Stomach (tissue), 19 donors: ENCODE measurements at regions of chr3 and their contacts with region 1.

Region 1: GRCh38 chr3:196251918-196252317 is 35.6 kb downstream of the SLC51A start:
- DNase-seq: no peak
- H3K4me3 ChIP-seq: no peak overlapping the region
- H3K27ac ChIP-seq: no peak overlapping the region
- H3K4me1 ChIP-seq: no peaks in the 10 kb centered on the region
- H3K27me3 ChIP-seq: no peaks in the 10 kb centered on the region
- CTCF ChIP-seq: no peak
- EP300 ChIP-seq: no peak
- POLR2A ChIP-seq: no peak

Region 2: DNA sequence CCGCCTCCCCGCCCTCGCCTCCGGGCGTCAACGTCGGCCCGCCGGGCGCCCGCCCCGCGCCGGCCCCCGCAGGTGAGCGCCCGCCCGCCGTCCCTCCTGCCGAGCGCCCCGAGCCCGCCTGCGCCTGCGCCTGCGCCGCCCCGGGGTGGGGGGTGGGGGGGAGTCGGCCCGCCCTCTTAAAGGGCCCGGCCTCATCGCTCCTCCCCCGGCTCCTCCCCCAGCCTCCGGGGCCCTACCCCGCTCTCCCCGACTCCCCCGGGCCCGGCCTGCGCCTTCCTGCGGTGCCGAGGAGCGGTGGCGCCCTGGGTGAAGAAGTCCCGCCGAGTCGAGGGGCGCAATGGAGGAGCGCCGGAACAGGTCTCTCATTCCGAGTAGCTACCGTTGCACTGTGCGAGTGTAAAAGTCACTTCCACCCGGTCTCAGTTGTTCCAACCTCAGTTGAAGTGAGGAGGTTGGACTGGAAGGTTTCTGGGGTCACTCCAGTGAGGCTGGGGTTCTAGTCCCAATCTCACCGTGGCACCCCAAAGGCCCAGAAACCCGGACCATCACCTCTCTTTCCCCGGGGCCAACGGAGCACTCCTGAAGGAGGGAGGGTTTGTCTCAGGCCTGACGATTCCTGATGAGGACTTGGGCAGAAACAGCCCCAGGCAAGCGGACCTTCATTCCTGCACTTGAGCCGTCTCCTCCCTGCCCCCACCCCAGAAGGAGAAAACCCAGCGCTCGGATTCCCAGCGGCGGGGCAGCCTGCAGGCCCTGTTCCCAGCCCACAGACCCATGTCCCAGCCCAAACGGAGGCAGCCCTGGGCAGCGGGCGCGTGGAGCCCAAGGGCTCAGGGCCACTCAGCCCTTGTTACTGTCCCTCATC is 342.0 kb before region 1 on chr3:
- intact Hi-C with region 1: no loop called
- DNase-seq: peak; percentile 92 to 96
- H3K4me3 ChIP-seq: peak overlapping the region; percentile 72 to 95 (median 80)
- H3K27ac ChIP-seq: peak overlapping the region; percentile 54 to 85 (median 75)
- H3K4me1 ChIP-seq: peaks cover 43 to 60% (median 47%) of the 10 kb centered on the region in 4 donors
- H3K27me3 ChIP-seq: no peaks in the 10 kb centered on the region
- CTCF ChIP-seq: no peak
- EP300 ChIP-seq: no peak
- POLR2A ChIP-seq: no peak

Region 3: GRCh38 chr3:196518966-196519717 is 267.2 kb after region 1 on chr3:
- intact Hi-C with region 1: loop called (anchors 10 kb)
- DNase-seq: peak; percentile 40 to 67
- H3K4me3 ChIP-seq: no peak overlapping the region
- H3K27ac ChIP-seq: no peak overlapping the region
- H3K4me1 ChIP-seq: no peaks in the 10 kb centered on the region
- H3K27me3 ChIP-seq: no peaks in the 10 kb centered on the region
- CTCF ChIP-seq: peak in 3 of 7 experiments; percentile 21 to 47 (median 40)
- EP300 ChIP-seq: no peak
- POLR2A ChIP-seq: no peak

Region 4: DNA sequence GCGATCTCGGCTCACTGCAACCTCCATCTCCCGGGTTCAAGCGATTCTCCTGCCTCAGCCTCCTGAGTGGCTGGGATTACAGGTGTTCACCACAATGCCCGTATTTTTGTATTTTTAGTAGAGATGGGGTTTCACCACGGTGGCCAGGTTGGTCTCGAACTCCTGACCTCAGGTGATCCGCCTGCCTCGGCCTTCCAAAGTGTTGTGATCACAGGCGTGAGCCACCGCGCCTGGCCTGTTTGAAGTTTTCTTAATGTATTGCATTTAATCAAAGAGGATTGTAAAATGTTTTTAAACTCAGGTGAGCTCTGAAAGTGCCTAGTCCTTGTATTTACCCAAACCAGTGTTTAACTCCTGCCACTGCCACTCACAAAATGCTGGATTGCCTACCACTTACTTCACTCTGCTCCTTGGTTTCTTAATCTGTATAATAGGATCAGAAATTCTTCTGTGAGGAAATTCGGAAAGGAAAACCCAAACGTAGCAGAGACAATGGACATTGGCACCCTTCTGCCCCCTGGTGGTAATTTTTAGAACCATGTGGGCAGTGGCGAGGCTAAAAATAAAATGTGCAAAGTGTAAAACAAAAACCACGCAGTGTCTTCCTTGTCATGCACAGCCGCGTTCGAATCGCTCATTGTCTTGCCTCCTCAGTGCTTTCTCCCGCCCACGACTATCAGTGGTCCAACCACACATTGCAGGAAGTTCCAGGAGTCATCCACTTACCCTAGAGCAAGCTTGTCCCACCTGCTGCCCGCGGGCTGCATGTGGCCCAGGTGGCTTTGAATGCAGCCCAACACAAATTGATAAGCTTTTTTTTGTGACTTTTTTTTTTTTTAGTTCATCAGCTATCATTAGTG is 432.9 kb after region 1 on chr3:
- intact Hi-C with region 1: loop called (anchors 10 kb)
- DNase-seq: peak; percentile 64 to 87
- H3K4me3 ChIP-seq: peak overlapping the region in 2 of 4 donors; percentile 7 to 8
- H3K27ac ChIP-seq: no peak overlapping the region
- H3K4me1 ChIP-seq: peaks cover 5 to 11% (median 8%) of the 10 kb centered on the region in 4 donors
- H3K27me3 ChIP-seq: no peaks in the 10 kb centered on the region
- CTCF ChIP-seq: peak in 5 of 7 experiments; percentile 75 to 91 (median 84)
- EP300 ChIP-seq: no peak
- POLR2A ChIP-seq: no peak